Ascending aorta (tissue), 2 donors: ENCODE measurements at regions of chr3 and their contacts with region 1.

Region 1: GRCh38 chr3:112561731-112562688 is at the starts of genes ATG3 and SLC35A5:
- DNase-seq: peak; percentile 95 to 100
- H3K4me3 ChIP-seq: peak within 1 kb of the TSS; percentile 70 to 73
- H3K27ac ChIP-seq: peak within 1 kb of the TSS; percentile 95 to 98
- H3K4me1 ChIP-seq: peaks cover 8 to 17% of the 10 kb centered on the region in 2 donors
- H3K27me3 ChIP-seq: no peaks in the 10 kb centered on the region
- CTCF ChIP-seq: peak in 1 of 3 experiments; percentile 5
- total RNA-seq, gene ATG3: 73.3 TPM
- total RNA-seq, gene SLC35A5: 20.8 TPM

Region 2: GRCh38 chr3:112321867-112322649 is 240.0 kb before region 1 on chr3:
- intact Hi-C with region 1: no loop called
- DNase-seq: no peak
- H3K4me3 ChIP-seq: no peak overlapping the region
- H3K27ac ChIP-seq: no peak overlapping the region
- H3K4me1 ChIP-seq: no peaks in the 10 kb centered on the region
- H3K27me3 ChIP-seq: no peaks in the 10 kb centered on the region
- CTCF ChIP-seq: no peak

Region 3: DNA sequence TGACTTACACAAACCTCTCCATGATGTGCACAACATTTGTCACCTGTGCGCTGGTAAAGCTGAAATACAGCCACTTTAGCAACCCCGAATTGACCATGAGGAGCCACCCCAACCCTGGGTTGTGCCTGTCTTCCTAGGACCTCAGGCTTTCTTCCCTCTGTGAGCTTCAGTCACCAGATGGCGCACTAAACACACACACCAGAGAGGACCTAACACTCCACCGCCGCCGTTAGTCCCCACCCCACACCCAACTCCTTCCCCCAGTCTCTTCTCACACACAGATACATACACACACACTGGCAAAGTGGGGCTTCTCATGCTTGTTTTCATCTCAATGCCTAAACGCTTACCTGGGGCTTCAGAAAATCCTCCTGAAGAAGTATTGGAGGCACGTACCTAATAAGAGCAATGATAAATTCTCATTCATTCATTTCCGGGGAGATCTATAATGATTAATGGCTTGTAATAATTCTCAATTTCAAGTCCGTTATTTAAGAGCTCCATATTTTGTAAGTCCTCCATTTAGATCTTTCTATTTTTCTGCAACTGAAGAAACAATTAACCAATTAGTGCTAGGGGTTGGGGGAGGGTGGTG is 81.0 kb after region 1 on chr3:
- intact Hi-C with region 1: loop called (anchors 2 kb)
- DNase-seq: peak; percentile 61 to 95
- H3K4me3 ChIP-seq: peak overlapping the region in 1 of 2 donors; percentile 21
- H3K27ac ChIP-seq: peak overlapping the region in 1 of 2 donors; percentile 83
- H3K4me1 ChIP-seq: peaks cover 3 to 15% of the 10 kb centered on the region in 2 donors
- H3K27me3 ChIP-seq: no peaks in the 10 kb centered on the region
- CTCF ChIP-seq: peak; percentile 83 to 90 (median 84)

Region 4: DNA sequence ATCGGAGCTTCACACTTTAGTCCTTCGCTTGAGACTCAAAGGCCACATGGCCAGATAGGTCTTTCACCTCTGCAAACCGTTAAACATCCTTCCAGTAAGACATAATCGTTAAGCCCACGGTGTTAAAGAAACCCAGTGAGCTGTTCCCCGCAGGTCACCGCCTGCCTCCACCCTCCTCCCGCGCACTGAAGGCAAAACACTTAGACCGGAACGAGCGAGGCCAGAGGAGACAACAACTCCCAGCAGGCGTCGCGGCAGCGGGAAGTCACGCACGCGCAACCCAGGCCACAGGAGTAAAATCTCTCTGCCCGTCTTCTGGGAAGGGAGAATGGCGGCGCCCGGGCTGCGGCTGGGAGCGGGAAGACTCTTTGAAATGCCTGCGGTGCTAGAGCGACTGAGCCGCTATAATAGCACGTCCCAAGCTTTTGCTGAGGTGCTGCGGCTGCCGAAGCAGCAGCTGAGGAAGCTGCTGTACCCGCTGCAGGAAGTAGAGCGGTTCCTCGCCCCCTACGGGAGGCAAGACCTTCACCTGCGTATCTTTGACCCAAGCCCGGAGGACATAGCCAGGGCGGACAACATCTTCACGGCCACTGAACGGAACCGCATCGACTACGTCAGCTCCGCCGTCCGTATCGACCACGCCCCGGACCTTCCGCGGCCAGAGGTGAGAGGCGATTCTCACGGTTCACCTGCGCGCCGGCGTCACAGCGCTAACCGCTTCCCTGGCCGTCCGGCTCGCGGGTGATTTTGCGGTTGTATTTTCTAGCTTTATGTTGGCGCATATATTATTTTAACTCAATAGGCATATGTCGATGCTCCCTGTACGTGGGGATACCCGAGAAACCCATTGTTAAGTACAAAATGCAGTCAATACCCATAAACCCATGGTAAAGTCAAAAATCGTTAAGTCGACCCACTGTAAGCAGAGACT is 428.9 kb after region 1 on chr3 and contains the start of gene GTPBP8:
- intact Hi-C with region 1: loop called (anchors 5 kb)
- DNase-seq: peak; percentile 58 to 94
- H3K4me3 ChIP-seq: peak within 1 kb of the TSS; percentile 70 to 91
- H3K27ac ChIP-seq: peak within 1 kb of the TSS; percentile 92 to 96
- H3K4me1 ChIP-seq: peaks cover 2 to 5% of the 10 kb centered on the region in 2 donors
- H3K27me3 ChIP-seq: no peaks in the 10 kb centered on the region
- CTCF ChIP-seq: peak in 1 of 3 experiments; percentile 11
- total RNA-seq, gene GTPBP8: 1.6 TPM

Region 5: GRCh38 chr3:113019182-113020137 is 457.4 kb after region 1 on chr3:
- intact Hi-C with region 1: loop called (anchors 1 kb)
- DNase-seq: peak; percentile 51 to 95
- H3K4me3 ChIP-seq: peak overlapping the region; percentile 75 to 76
- H3K27ac ChIP-seq: peak overlapping the region; percentile 93 to 95
- H3K4me1 ChIP-seq: peaks cover 9 to 13% of the 10 kb centered on the region in 2 donors
- H3K27me3 ChIP-seq: no peaks in the 10 kb centered on the region
- CTCF ChIP-seq: no peak

Region 6: DNA sequence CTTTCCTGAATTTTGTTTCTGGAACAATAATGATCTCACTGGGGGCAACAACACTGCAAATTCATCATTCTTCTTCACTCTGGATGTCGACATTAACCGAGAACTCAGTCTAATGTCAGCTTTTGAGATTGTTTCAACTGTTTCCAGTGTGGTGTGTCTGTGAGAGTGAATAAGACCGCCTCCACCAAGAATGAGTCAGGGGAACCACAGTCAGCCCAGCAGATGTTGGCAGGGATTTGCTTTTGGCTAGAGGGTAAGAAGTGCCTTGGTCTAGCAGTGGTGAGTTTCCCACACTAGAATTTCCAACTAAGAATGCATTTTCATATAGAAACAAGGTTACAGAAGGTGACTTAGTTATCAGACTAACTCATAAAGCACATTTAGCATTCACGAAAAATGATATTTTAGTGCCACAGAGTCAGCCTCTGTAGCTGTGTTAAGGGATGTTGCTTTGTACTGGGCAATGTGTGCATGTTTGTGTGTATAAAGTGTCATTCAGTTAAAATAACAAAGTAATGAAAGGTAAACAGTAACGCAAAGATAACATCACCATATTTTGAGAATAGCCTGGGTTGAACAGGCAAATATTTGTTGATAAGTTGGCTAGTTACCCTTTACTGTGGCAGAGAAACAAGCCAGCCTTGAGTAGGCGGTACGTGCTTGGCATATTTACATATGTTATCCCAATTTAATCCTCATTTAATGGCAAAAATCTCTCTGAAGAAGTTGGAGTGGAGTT is 1583.1 kb after region 1 on chr3:
- intact Hi-C with region 1: loop called (anchors 10 kb)
- DNase-seq: peak in 1 of 2 donors; percentile 78
- H3K4me3 ChIP-seq: no peak overlapping the region
- H3K27ac ChIP-seq: peak overlapping the region; percentile 58 to 65
- H3K4me1 ChIP-seq: peaks cover 6 to 15% of the 10 kb centered on the region in 2 donors
- H3K27me3 ChIP-seq: no peaks in the 10 kb centered on the region
- CTCF ChIP-seq: no peak